ENCODE measurements at regions of chr6 and their contacts with region 1.

Region 1: DNA sequence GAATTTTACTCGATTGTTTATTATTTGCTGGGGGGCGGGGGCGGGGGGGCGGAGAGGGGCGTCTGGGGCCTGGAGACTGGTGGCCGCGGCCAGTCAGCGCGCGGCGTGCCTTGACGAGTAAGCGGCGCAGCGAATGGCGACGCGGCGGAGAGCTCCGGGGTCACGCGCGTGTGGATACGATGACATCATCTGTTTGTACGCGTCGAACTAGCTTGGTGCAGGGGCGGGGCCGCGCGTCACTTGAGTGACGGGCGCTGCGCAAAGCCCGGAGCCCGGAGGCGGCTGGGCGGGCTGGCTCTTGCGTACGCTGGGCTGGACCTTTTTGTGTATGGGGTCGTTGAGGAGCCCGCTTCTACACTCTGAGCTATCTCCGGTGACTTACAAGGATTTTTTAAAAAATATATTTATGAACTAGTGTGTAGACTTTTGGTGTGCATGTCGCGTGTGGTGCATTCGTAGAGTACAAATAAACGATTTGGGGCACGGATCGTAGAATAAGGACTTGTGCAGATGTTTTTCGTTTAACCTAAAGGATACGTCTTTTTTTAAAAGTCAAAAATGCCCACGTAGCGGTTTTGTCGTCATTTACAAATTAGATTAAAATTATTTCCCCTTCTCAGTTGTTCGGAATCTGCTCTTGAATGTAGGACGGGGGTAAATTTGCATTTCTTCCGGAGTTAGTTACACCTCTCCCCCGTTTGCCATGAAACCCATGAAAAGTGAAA is 2.2 kb upstream of the FOXO3 start:
- DNase-seq: peak; percentile 99
- H3K4me3 ChIP-seq: peak overlapping the region; percentile 74 to 93 (median 82)
- H3K27ac ChIP-seq: peak overlapping the region; percentile 96 to 100 (median 99)
- H3K4me1 ChIP-seq: peaks cover 2 to 35% (median 30%) of the 10 kb centered on the region in 4 donors
- H3K27me3 ChIP-seq: no peaks in the 10 kb centered on the region
- CTCF ChIP-seq: no peak
- EP300 ChIP-seq: peak in 3 of 4 donors; percentile 52 to 85 (median 77)
- POLR2A ChIP-seq: peak; percentile 31 to 57

Region 2: GRCh38 chr6:107489636-107490565 is 1068.6 kb before region 1 on chr6 and contains the start of gene SOBP:
- intact Hi-C with region 1: loop called (anchors 5 kb)
- DNase-seq: peak; percentile 89
- H3K4me3 ChIP-seq: peak within 1 kb of the TSS; percentile 77 to 86 (median 82)
- H3K27ac ChIP-seq: peak within 1 kb of the TSS; percentile 88 to 95 (median 92)
- H3K4me1 ChIP-seq: peaks cover 0 to 40% (median 25%) of the 10 kb centered on the region in 4 donors
- H3K27me3 ChIP-seq: peaks cover 0 to 6% (median 0%) of the 10 kb centered on the region in 3 donors
- CTCF ChIP-seq: no peak
- EP300 ChIP-seq: no peak
- POLR2A ChIP-seq: no peak
- total RNA-seq, gene SOBP: 16.8 to 38.5 (median 22.8) TPM

Region 3: GRCh38 chr6:108464418-108465093 is 94.0 kb before region 1 on chr6:
- intact Hi-C with region 1: no loop called
- DNase-seq: no peak
- H3K4me3 ChIP-seq: no peak overlapping the region
- H3K27ac ChIP-seq: no peak overlapping the region
- H3K4me1 ChIP-seq: peaks cover 0 to 10% (median 3%) of the 10 kb centered on the region in 4 donors
- H3K27me3 ChIP-seq: no peaks in the 10 kb centered on the region
- CTCF ChIP-seq: no peak
- EP300 ChIP-seq: no peak
- POLR2A ChIP-seq: no peak

Region 4: GRCh38 chr6:108655806-108656651 is 97.5 kb after region 1 on chr6:
- intact Hi-C with region 1: loop called (anchors 5 kb)
- DNase-seq: peak; percentile 77
- H3K4me3 ChIP-seq: peak overlapping the region in 1 of 4 donors; percentile 3
- H3K27ac ChIP-seq: peak overlapping the region; percentile 69 to 87 (median 84)
- H3K4me1 ChIP-seq: peaks cover 0 to 83% (median 75%) of the 10 kb centered on the region in 4 donors
- H3K27me3 ChIP-seq: no peaks in the 10 kb centered on the region
- CTCF ChIP-seq: no peak
- EP300 ChIP-seq: peak in 1 of 4 donors; percentile 45
- POLR2A ChIP-seq: no peak

Region 5: DNA sequence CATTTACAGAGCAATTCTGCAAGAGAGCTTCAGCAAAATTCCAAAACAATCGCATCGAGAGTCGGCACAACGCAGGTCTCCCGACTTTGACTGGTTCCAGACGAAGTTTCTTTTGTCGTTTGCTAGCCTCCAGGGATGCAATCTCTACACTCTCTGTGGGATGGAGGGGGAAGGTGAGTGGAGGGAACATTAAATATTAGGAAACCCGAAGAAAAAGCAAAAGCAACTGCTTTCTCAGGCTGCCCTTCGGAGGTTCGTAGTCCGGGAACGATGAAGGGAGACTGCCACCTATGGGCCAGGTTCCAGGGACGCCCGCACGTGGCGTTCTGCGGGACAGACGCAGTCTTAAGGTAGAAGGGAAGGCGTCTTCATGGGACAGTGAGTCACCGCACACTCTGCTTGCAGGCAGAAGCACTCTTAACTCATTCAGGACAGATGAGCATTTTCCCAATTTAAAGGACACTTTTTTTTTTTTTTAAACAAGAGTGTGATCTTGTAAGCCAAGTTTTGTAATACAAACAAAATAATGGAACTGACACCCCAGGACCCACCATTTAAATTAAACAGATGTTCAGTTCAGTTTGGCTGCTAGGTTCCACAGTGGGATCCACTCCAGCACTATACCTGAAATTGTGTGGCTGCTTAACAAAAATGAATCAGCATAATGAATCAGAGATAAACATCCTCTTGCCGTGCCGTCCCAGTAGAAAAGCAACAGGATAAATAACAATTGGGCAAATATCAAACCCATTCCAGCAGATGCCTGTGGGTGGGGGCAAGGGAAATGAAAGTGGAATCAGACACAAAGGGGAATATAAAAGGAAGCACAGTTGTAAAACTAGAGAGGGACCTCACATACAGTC is 223.9 kb after region 1 on chr6:
- intact Hi-C with region 1: loop called (anchors 2 kb)
- DNase-seq: peak; percentile 93
- H3K4me3 ChIP-seq: peak overlapping the region; percentile 23 to 52 (median 42)
- H3K27ac ChIP-seq: peak overlapping the region; percentile 63 to 83 (median 68)
- H3K4me1 ChIP-seq: peaks cover 0 to 23% (median 14%) of the 10 kb centered on the region in 4 donors
- H3K27me3 ChIP-seq: no peaks in the 10 kb centered on the region
- CTCF ChIP-seq: peak; percentile 55 to 76 (median 64)
- EP300 ChIP-seq: peak in 2 of 4 donors; percentile 28 to 51
- POLR2A ChIP-seq: no peak

Region 6: DNA sequence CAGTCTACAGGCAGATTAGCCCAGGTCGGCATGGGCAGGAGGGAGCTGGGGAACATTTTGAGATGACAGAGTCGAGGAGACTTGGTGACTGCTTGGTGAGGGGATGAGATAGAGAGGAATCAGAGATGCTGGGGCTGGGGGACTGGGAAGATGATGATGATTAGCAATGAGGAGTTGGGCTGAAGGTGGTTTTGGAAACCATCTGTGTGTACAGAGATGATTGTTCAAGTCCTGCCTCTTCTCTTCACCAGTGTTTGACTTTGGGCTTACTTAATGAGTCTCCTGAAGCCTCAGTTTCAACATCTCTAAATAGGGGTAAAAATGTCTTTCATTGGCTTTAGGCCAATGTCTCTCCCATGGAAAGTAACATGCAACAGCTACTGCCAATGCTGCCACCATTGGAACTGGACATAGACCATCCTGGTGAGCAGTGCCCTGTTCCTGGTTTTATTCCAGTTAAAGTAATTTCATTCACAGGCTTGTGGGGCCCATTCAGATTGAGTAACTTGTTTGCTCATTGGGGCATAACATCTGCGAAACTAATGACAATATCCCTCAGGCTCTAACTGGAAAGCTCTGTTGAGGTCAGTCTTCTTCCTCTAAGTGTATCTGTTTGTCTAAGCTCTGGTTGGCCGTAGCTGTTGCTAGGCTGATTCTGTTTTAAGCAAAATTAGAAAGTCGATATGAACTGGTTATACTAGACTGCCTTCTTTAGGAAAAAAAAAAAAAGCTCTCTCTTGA is 388.8 kb after region 1 on chr6:
- intact Hi-C with region 1: loop called (anchors 1 kb)
- DNase-seq: no peak
- H3K4me3 ChIP-seq: no peak overlapping the region
- H3K27ac ChIP-seq: peak overlapping the region; percentile 83 to 93 (median 86)
- H3K4me1 ChIP-seq: peaks cover 0 to 79% (median 61%) of the 10 kb centered on the region in 4 donors
- H3K27me3 ChIP-seq: no peaks in the 10 kb centered on the region
- CTCF ChIP-seq: no peak
- EP300 ChIP-seq: no peak
- POLR2A ChIP-seq: no peak

Region 7: DNA sequence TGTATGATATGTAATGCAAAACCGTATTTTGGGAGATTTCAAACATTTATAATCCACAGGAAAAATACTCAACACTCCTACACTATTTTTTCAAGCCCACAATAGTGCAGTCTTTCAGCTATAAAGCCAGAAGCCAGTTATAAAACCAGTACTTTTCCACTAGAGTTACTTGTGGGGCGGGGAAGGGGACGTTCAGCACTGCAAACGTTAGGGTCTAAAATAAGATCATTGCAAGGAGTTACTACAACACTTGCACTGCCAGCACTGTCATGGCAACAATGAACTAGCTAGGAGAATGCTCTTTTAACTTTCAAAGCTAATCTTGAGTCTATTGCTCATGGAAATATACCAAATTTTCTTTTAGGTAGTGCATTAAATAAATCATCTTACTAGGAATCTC is 521.4 kb after region 1 on chr6:
- intact Hi-C with region 1: loop called (anchors 5 kb)
- DNase-seq: peak; percentile 90
- H3K4me3 ChIP-seq: peak overlapping the region in 1 of 4 donors; percentile 14
- H3K27ac ChIP-seq: peak overlapping the region; percentile 64 to 84 (median 78)
- H3K4me1 ChIP-seq: peaks cover 0 to 71% (median 54%) of the 10 kb centered on the region in 4 donors
- H3K27me3 ChIP-seq: no peaks in the 10 kb centered on the region
- CTCF ChIP-seq: no peak
- EP300 ChIP-seq: peak in 2 of 4 donors; percentile 28 to 43
- POLR2A ChIP-seq: no peak

Region 8: GRCh38 chr6:109187399-109188114 is 629.0 kb after region 1 on chr6:
- intact Hi-C with region 1: no loop called
- DNase-seq: peak; percentile 66
- H3K4me3 ChIP-seq: no peak overlapping the region
- H3K27ac ChIP-seq: no peak overlapping the region
- H3K4me1 ChIP-seq: no peaks in the 10 kb centered on the region
- H3K27me3 ChIP-seq: no peaks in the 10 kb centered on the region
- CTCF ChIP-seq: peak; percentile 59 to 92 (median 82)
- EP300 ChIP-seq: no peak
- POLR2A ChIP-seq: no peak

Region 9: DNA sequence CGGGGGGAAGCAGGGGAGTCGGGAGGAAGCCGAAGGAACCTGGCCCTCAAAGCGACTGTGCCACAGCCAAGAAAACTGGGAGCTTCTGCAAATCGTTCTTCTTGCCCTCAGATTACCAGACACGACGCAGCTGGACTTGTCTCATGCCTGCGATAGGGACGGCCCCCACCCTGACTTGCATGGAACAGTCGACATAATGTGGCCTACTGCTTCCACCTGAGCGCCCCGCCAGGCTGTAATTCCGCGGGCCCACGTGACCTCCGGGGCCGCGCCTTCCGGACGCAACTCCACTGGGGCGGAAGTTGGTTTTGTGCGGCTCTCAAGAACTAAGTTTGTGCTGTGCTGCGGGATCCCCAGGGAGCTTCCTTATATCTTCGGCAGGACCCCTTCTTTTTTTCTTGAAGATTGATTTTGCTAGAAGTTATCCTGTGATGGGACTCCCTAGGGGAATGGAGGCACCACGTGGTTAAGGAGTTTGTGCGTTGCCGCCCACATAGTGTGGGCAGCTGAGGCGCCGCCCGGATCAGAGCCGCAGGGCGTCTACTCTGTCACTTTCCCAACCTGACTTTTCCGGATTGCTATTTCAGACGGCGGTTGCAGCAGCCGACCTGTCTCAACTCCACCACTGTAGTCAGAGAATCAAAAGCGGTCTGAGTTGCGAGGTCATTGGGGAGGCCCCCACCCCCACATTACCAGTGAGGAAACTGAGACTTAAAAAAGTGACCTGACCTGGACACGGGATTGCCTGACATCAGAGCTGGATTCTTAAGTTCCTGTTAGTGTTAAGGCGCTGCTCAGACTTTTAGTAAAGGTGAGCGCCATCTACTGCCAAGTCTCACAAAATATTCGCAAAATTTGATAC is 824.3 kb after region 1 on chr6:
- intact Hi-C with region 1: loop called (anchors 10 kb)
- DNase-seq: peak; percentile 96
- H3K4me3 ChIP-seq: peak overlapping the region; percentile 70 to 99 (median 92)
- H3K27ac ChIP-seq: peak overlapping the region; percentile 93 to 100 (median 99)
- H3K4me1 ChIP-seq: peaks cover 0 to 41% (median 30%) of the 10 kb centered on the region in 4 donors
- H3K27me3 ChIP-seq: no peaks in the 10 kb centered on the region
- CTCF ChIP-seq: peak in 3 of 4 experiments; percentile 23 to 41 (median 38)
- EP300 ChIP-seq: peak in 1 of 4 donors; percentile 1
- POLR2A ChIP-seq: peak; percentile 4 to 14